WTC11 (cell line): ENCODE measurements at regions of chr18 and their contacts with region 1.

Region 1: GRCh38 chr18:24016643-24017042 is 2.1 kb downstream of the TTC39C start:
- DNase-seq: no peak
- ATAC-seq: peak; percentile 14
- H3K4me3 Mint-ChIP-seq: peak overlapping the region; percentile 86
- H3K27ac Mint-ChIP-seq: no peak overlapping the region
- H3K4me1 Mint-ChIP-seq: peaks cover 61% of the 10 kb centered on the region
- H3K27me3 Mint-ChIP-seq: peaks cover 11% of the 10 kb centered on the region
- CTCF ChIP-seq: peak; percentile 24; the same call in 1 of the 2 replicates

Region 2: GRCh38 chr18:24027156-24027827 is 10.6 kb after region 1 on chr18:
- CTCF ChIA-PET with region 1: interaction called, 11 read pairs
- POLR2A ChIA-PET with region 1: no interaction called
- DNase-seq: no peak
- ATAC-seq: no peak
- H3K4me3 Mint-ChIP-seq: no peak overlapping the region
- H3K27ac Mint-ChIP-seq: peak overlapping the region; percentile 23
- H3K4me1 Mint-ChIP-seq: peaks cover 47% of the 10 kb centered on the region
- H3K27me3 Mint-ChIP-seq: no peaks in the 10 kb centered on the region
- CTCF ChIP-seq: no peak